K562 (cell line): ENCODE measurements at regions of chr1 and their contacts with region 1.

Region 1: DNA sequence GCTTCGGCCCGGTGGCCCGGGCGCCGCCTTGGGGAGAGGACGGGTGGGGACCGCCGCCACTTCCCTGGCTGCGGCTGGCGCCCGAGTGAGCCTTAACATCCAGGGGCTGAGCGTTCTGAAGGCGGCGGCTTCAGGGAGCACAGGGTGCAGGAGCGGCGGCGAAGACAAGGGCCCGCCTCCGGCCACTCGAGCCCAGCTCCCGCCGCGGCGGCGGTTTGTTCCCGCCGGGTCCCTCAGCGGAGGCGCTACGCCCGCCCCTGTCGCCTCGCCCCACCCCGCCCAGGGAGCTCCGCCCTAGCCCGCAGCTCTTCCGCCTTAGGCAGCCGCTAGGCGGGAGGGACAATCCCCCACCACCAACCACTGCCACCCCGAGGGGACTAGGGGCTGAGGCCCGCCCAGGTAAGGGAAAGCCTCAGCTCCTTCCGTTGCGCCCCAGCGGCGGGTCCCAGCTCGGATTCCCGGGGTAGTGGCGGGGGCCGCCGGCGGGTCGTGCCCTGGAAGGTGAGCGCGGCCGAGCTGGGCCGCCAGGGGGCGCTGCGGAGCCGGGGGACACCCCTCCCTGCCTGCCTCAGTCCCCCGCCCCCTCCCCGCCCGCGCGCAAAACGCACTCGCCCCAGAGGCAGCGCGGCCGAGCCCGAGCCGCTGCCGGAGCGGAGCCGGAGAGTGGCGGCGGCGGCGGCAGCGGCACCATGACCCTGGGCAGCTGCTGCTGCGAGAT is at the start of gene FOXD2:
- DNase-seq: peak; percentile 95 to 98 (median 97)
- ATAC-seq: peak; percentile 93
- H3K4me3 ChIP-seq: peak within 1 kb of the TSS; percentile 70
- H3K27ac ChIP-seq: peak within 1 kb of the TSS; percentile 90
- H3K4me1 ChIP-seq: peaks cover 3 to 53% of the 10 kb centered on the region in 2 experiments; a peak in 4 of 5 replicates
- H3K27me3 ChIP-seq: peaks cover 21 to 24% of the 10 kb centered on the region in 2 experiments; a peak in 4 of 5 replicates
- CTCF ChIP-seq: peak; percentile 91 to 94 (median 92)
- EP300 ChIP-seq: no peak
- POLR2A ChIP-seq: no peak; the same call in none of the 2 replicates
- RAD21 ChIP-seq: peak; percentile 56 to 66
- polyA plus RNA-seq, gene FOXD2: 0.06 to 0.07 TPM

Region 2: DNA sequence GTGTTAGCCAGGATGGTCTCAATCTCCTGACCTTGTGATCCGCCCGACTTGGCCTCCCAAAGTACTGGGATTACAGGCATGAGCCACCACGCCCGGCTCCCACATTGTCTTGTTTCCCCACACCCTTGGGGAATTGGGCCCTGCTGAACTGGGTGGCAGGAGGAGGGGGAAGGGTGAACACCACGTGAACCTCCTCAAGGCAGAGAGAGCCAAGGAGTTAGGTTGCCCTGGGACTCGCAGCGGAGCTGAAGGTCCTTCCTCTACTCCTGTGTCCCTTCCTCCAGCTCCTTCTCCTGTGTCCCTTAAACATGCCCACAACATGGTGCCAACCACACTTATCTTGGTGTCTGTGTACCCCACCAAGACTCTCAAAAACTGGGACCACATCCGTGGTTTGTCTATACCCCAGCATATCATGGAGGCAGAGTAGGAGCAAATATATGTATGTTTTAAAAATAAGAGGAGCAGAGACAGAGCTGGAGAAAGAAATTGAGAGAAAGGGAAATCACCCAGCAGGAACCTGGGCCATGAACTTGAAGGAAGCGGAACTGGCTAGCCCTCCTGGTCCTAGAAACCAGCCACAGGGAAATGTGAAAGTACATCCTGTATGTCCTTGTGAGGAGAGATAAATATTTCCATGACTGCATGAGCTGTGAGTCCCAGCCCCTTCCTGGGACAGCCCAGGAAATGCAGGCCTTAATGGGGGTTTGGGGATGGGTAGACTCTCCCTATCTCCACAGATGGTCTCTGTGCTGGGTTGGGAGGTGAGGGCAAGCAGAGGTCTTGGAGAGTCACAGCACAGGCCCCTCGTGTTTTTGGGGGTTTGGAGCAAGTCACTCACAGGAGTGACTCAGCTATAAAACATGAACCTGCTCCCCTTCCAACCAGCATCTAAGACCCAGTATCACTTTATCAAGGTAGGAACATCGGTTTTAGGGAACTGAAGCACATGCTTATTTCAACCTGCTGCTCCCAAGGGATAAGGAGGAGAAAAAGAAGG is 196.2 kb before region 1 on chr1:
- CTCF ChIA-PET with region 1: no interaction called
- POLR2A ChIA-PET with region 1: no interaction called
- in situ Hi-C with region 1: no loop called
- intact Hi-C with region 1: no loop called
- DNase-seq: peak; percentile 58 to 78 (median 66)
- ATAC-seq: peak; percentile 40
- H3K4me3 ChIP-seq: no peak overlapping the region
- H3K27ac ChIP-seq: peak overlapping the region; percentile 78
- H3K4me1 ChIP-seq: peaks cover 45 to 65% of the 10 kb centered on the region in 2 experiments
- H3K27me3 ChIP-seq: no peaks in the 10 kb centered on the region
- CTCF ChIP-seq: no peak
- EP300 ChIP-seq: 0 out of 2 replicates have a peak, but pooled peaks have one; percentile 34
- POLR2A ChIP-seq: peak; percentile 49; the same call in 1 of the 2 replicates
- RAD21 ChIP-seq: no peak

Region 3: DNA sequence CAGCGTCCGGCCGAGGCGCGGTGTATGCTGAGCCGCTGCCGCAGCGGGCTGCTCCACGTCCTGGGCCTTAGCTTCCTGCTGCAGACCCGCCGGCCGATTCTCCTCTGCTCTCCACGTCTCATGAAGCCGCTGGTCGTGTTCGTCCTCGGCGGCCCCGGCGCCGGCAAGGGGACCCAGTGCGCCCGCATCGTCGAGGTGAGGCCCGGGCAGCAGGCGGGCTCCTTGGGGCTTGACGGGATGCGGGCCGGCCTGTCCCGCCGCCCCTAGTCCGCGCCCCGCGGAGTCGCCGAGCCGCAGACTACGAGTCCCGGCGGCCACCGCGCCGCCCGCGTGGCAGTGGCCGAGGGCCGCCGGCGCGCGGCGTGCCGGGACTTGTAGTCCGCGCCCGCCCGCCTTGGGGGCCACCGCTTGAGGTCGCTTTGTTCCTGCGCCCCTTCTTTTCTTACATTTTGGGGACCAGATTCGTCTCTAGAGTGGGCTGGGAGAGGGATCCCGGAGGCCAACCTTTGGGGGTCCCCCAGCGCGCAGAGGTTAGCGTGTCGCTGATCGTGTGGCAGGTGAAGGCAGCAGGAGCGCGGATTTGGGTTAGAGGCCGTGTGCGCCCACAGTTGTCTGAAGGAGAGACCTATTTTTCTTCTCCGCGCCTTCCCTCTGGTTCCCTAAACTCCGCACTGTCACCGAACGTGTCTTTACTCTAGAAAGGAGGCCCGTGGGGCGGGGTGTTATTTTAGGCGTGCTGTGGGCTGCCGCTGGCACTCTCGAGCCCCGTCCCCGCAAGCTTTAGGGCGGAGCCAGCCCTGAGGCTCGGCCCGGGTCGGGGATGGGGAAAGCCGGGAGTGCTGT is 103.5 kb before region 1 on chr1:
- CTCF ChIA-PET with region 1: no interaction called
- POLR2A ChIA-PET with region 1: interaction called, 5 read pairs
- in situ Hi-C with region 1: no loop called
- intact Hi-C with region 1: loop called (anchors 5 kb)
- DNase-seq: peak; percentile 85 to 93 (median 90)
- ATAC-seq: peak; percentile 88
- H3K4me3 ChIP-seq: peak overlapping the region; percentile 93
- H3K27ac ChIP-seq: peak overlapping the region; percentile 85
- H3K4me1 ChIP-seq: peaks cover 23 to 28% of the 10 kb centered on the region in 2 experiments; a peak in 4 of 5 replicates
- H3K27me3 ChIP-seq: no peaks in the 10 kb centered on the region
- CTCF ChIP-seq: peak; percentile 41 to 53 (median 51)
- EP300 ChIP-seq: no peak; the same call in 1 of the 2 replicates
- POLR2A ChIP-seq: peak; percentile 81
- RAD21 ChIP-seq: no peak

Region 4: DNA sequence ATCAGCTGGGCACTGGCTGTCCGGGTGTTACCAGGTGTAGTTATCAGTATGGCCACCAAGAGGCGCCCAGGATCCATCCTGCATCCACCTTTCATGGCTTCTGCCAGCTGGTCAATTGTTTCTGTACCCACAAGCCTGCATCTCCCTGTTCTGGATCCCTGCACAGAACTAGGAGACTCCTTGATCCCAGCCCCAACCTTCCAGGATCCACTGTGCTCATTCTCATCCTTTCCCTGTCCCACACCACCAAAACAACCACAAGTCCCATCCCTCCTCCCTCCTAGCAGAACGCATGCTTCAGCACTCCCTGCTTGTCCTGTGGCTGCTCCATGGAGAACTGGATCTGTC is 48.7 kb before region 1 on chr1:
- CTCF ChIA-PET with region 1: no interaction called
- POLR2A ChIA-PET with region 1: interaction called, 7 read pairs
- in situ Hi-C with region 1: no loop called
- intact Hi-C with region 1: loop called (anchors 2 kb)
- DNase-seq: peak; percentile 78 to 82 (median 80)
- ATAC-seq: peak; percentile 93
- H3K4me3 ChIP-seq: no peak overlapping the region
- H3K27ac ChIP-seq: no peak overlapping the region
- H3K4me1 ChIP-seq: no peaks in the 10 kb centered on the region; a peak in 1 of 5 replicates
- H3K27me3 ChIP-seq: peaks cover 7 to 8% of the 10 kb centered on the region in 2 experiments; a peak in 4 of 5 replicates
- CTCF ChIP-seq: peak; percentile 92 to 96 (median 94)
- EP300 ChIP-seq: no peak
- POLR2A ChIP-seq: no peak
- RAD21 ChIP-seq: peak; percentile 62 to 90

Region 5: GRCh38 chr1:47449822-47450552 is 12.4 kb after region 1 on chr1:
- CTCF ChIA-PET with region 1: interaction called, 3 read pairs
- POLR2A ChIA-PET with region 1: interaction called, 11 read pairs
- in situ Hi-C with region 1: no loop called
- intact Hi-C with region 1: no loop called
- DNase-seq: peak; percentile 57 to 80 (median 75)
- ATAC-seq: peak; percentile 90
- H3K4me3 ChIP-seq: no peak overlapping the region
- H3K27ac ChIP-seq: no peak overlapping the region
- H3K4me1 ChIP-seq: peaks cover 0 to 6% of the 10 kb centered on the region in 2 experiments; a peak in 2 of 5 replicates
- H3K27me3 ChIP-seq: peaks cover 52 to 60% of the 10 kb centered on the region in 2 experiments
- CTCF ChIP-seq: peak; percentile 74 to 78 (median 76)
- EP300 ChIP-seq: no peak
- POLR2A ChIP-seq: no peak
- RAD21 ChIP-seq: peak in 1 of 2 experiments; percentile 67; a peak in 3 of 4 replicates

Region 6: DNA sequence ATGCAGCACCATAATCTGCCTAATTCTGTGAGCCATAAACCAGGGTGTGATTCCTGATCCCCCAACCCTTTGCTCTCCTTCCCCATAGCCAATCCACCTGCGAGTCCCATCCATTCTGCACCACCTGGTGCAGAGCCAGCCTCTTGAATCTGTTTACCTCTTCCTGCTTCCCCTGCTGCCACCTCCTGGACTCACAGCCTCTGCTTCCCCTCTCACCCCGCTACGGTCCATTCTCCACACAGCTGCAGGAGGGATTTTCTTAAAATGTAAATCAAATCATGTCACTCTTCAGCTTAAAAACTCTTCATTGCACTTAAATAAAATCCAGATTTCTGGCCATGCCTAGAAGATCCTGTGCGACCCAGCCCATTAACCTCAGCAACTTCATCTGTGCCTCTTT is 186.9 kb after region 1 on chr1:
- CTCF ChIA-PET with region 1: interaction called, 5 read pairs
- POLR2A ChIA-PET with region 1: interaction called, 3 read pairs
- in situ Hi-C with region 1: no loop called
- intact Hi-C with region 1: loop called (anchors 10 kb)
- DNase-seq: peak; percentile 26 to 39 (median 34)
- ATAC-seq: peak; percentile 83
- H3K4me3 ChIP-seq: no peak overlapping the region
- H3K27ac ChIP-seq: no peak overlapping the region
- H3K4me1 ChIP-seq: no peaks in the 10 kb centered on the region
- H3K27me3 ChIP-seq: peaks cover 2 to 20% of the 10 kb centered on the region in 2 experiments; a peak in 3 of 5 replicates
- CTCF ChIP-seq: peak; percentile 51 to 91 (median 70)
- EP300 ChIP-seq: no peak
- POLR2A ChIP-seq: no peak
- RAD21 ChIP-seq: peak in 1 of 2 experiments; percentile 59; a peak in 2 of 4 replicates

Region 7: GRCh38 chr1:47710329-47711071 is 272.9 kb after region 1 on chr1:
- CTCF ChIA-PET with region 1: interaction called, 15 read pairs
- POLR2A ChIA-PET with region 1: interaction called, 3 read pairs
- in situ Hi-C with region 1: loop called (anchors 5 kb)
- intact Hi-C with region 1: loop called (anchors 2 kb)
- DNase-seq: peak; percentile 71 to 97 (median 94)
- ATAC-seq: peak; percentile 96
- H3K4me3 ChIP-seq: no peak overlapping the region
- H3K27ac ChIP-seq: no peak overlapping the region
- H3K4me1 ChIP-seq: peaks cover 0 to 24% of the 10 kb centered on the region in 2 experiments; a peak in 2 of 5 replicates
- H3K27me3 ChIP-seq: peaks cover 30 to 60% of the 10 kb centered on the region in 2 experiments; a peak in 4 of 5 replicates
- CTCF ChIP-seq: peak; percentile 93 to 98 (median 96)
- EP300 ChIP-seq: no peak
- POLR2A ChIP-seq: no peak
- RAD21 ChIP-seq: peak; percentile 87 to 95

Region 8: GRCh38 chr1:47725992-47726855 is 288.6 kb after region 1 on chr1:
- CTCF ChIA-PET with region 1: interaction called, 3 read pairs
- POLR2A ChIA-PET with region 1: interaction called, 8 read pairs
- in situ Hi-C with region 1: no loop called
- intact Hi-C with region 1: loop called (anchors 5 kb)
- DNase-seq: peak; percentile 80 to 86 (median 80)
- ATAC-seq: peak; percentile 98
- H3K4me3 ChIP-seq: no peak overlapping the region
- H3K27ac ChIP-seq: no peak overlapping the region
- H3K4me1 ChIP-seq: peaks cover 0 to 10% of the 10 kb centered on the region in 2 experiments; a peak in 1 of 5 replicates
- H3K27me3 ChIP-seq: peaks cover 15 to 59% of the 10 kb centered on the region in 2 experiments
- CTCF ChIP-seq: peak; percentile 87 to 96 (median 93)
- EP300 ChIP-seq: no peak
- POLR2A ChIP-seq: no peak
- RAD21 ChIP-seq: peak; percentile 69 to 91